T-cell (primary cell): ENCODE measurements at regions of chr3 and their contacts with region 1.

Region 1: GRCh38 chr3:129224984-129225393 is 24.4 kb upstream of the COPG1 start:
- DNase-seq: peak in 3 of 35 experiments; percentile 6 to 22 (median 15)
- ATAC-seq: peak in 2 of 4 experiments; percentile 43 to 44
- H3K4me3 ChIP-seq: no peak overlapping the region
- H3K4me3 Mint-ChIP-seq: peak overlapping the region in 1 of 3 donors; percentile 64
- H3K27ac ChIP-seq: no peak overlapping the region
- H3K27ac Mint-ChIP-seq: peak overlapping the region; percentile 87 to 89
- H3K4me1 ChIP-seq: peaks cover 8 to 18% of the 10 kb centered on the region in 2 experiments
- H3K4me1 Mint-ChIP-seq: peaks cover 17 to 36% (median 33%) of the 10 kb centered on the region in 3 donors
- H3K27me3 ChIP-seq: peaks cover 0 to 5% of the 10 kb centered on the region in 2 experiments
- H3K27me3 Mint-ChIP-seq: no peaks in the 10 kb centered on the region

Region 2: DNA sequence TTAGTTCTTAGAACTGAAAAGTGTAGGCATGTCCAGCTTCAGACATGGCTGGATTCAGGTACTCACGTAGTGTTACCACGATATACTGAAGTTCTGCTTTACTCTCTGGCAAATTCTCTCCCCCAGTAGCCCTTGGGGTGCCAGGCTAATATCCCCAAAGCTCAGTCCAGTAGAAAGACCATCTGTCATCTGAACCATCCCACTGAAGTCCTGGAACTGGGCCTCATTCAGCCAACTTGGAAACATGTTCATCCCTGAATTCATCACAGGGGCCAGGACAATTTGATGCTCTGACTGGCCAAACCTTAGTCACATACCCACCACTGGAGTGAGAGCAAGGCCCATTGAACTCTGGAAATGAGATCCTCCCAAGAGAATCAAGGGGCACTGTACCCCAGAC is 215.7 kb before region 1 on chr3:
- CTCF ChIA-PET with region 1: interaction called in 1 of 2 experiments, 10 read pairs
- POLR2A ChIA-PET with region 1: no interaction called
- DNase-seq: no peak
- ATAC-seq: no peak
- H3K4me3 ChIP-seq: no peak overlapping the region
- H3K4me3 Mint-ChIP-seq: no peak overlapping the region
- H3K27ac ChIP-seq: no peak overlapping the region
- H3K27ac Mint-ChIP-seq: peak overlapping the region in 1 of 2 donors; percentile 58
- H3K4me1 ChIP-seq: peaks cover 4 to 14% of the 10 kb centered on the region in 2 experiments
- H3K4me1 Mint-ChIP-seq: peaks cover 16 to 28% (median 17%) of the 10 kb centered on the region in 3 donors
- H3K27me3 ChIP-seq: peaks cover 0 to 6% of the 10 kb centered on the region in 2 experiments
- H3K27me3 Mint-ChIP-seq: peaks cover 0 to 4% of the 10 kb centered on the region in 2 donors

Region 3: DNA sequence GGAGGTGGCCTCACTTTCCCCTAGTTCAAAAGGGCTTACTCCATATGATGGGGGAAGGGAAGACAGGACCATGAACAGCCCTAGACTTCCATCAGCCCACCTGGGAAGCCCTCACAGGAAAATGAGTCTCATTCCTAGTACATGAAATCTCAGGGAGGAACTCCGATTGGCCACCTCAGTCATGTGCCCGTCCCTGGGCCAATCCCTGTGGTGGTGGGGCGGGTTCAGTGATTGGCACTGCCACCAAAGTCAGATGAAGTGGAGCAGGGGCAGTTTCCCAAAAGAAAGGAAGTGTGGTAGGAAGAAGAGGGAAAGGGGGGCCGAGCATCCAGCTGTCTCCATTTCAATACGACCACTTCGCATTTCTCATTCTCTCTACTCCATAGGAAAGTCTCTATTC is 190.3 kb before region 1 on chr3:
- CTCF ChIA-PET with region 1: no interaction called
- POLR2A ChIA-PET with region 1: no interaction called
- DNase-seq: peak in 1 of 35 experiments; percentile 18
- ATAC-seq: peak in 1 of 4 experiments; percentile 49
- H3K4me3 ChIP-seq: no peak overlapping the region
- H3K4me3 Mint-ChIP-seq: no peak overlapping the region
- H3K27ac ChIP-seq: no peak overlapping the region
- H3K27ac Mint-ChIP-seq: no peak overlapping the region
- H3K4me1 ChIP-seq: peaks cover 9 to 23% of the 10 kb centered on the region in 2 experiments
- H3K4me1 Mint-ChIP-seq: peaks cover 17 to 25% (median 19%) of the 10 kb centered on the region in 3 donors
- H3K27me3 ChIP-seq: peaks cover 0 to 14% of the 10 kb centered on the region in 2 experiments
- H3K27me3 Mint-ChIP-seq: peaks cover under 1 to 5% of the 10 kb centered on the region in 2 donors

Region 4: DNA sequence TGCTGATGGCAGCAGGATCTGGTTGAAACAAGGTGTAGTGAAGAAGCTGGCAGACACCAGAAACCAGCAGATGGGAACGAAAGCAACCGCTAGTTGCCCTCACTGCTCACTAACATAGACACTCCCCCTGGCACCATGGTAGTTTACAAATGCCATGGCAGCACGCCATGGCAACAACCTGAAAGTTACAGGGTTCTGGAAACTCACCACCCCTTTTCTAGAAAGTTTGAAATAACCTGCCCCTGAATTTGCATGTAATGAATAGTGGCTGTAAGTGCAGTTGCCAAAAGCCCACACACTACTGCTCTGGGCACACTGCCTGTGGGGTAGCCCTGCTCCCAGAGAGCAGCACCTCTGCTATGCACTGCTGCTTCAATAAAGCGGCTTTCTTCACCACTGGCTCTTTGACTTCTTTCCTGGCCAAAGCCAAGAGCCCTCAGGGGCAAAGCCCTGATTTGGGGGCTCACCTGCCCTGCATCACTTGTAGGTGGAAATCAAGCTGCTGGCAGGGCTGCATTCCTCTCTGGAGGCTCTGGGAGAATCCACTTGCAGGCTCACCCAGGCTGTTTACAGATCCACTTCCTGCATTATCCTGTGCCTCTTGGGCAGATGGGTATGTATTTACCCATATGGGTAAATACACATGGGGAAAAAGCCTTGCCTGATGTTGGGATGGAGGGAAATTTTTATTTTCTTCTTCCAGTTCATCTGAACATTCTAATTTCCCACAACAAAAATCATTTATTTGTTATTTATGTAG is 166.4 kb before region 1 on chr3:
- CTCF ChIA-PET with region 1: no interaction called
- POLR2A ChIA-PET with region 1: no interaction called
- DNase-seq: peak in 9 of 35 experiments; percentile 18 to 45 (median 26)
- ATAC-seq: peak in 3 of 4 experiments; percentile 13 to 81 (median 43)
- H3K4me3 ChIP-seq: no peak overlapping the region
- H3K4me3 Mint-ChIP-seq: no peak overlapping the region
- H3K27ac ChIP-seq: no peak overlapping the region
- H3K27ac Mint-ChIP-seq: no peak overlapping the region
- H3K4me1 ChIP-seq: peaks cover 0 to 7% of the 10 kb centered on the region in 2 experiments
- H3K4me1 Mint-ChIP-seq: peaks cover 3 to 16% (median 9%) of the 10 kb centered on the region in 3 donors
- H3K27me3 ChIP-seq: peaks cover 0 to 11% of the 10 kb centered on the region in 2 experiments
- H3K27me3 Mint-ChIP-seq: no peaks in the 10 kb centered on the region

Region 5: DNA sequence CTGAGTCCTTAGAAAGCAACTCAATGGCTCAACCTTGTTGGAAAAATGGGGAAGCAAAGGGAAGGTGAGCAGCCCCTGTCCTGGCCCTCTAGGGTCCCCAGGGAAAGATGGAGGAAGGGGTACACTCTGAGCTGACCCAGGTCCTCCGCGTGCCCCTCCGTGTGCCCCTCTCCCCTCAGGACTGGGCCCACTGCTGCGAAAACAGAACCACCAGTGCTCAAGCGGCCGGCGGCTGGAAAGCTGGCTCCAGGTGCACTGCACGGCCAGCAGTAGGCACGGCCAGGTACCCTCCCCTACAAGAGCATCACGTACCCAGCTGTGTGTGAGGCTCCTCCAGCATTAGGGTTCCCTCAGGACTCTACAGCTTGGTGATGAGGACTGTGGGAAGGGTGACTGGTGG is 129.7 kb before region 1 on chr3:
- CTCF ChIA-PET with region 1: no interaction called
- POLR2A ChIA-PET with region 1: interaction called in 1 of 2 experiments, 11 read pairs
- DNase-seq: no peak
- ATAC-seq: no peak
- H3K4me3 ChIP-seq: no peak overlapping the region
- H3K4me3 Mint-ChIP-seq: no peak overlapping the region
- H3K27ac ChIP-seq: no peak overlapping the region
- H3K27ac Mint-ChIP-seq: no peak overlapping the region
- H3K4me1 ChIP-seq: peaks cover 0 to 24% of the 10 kb centered on the region in 2 experiments
- H3K4me1 Mint-ChIP-seq: peaks cover 32 to 37% (median 35%) of the 10 kb centered on the region in 3 donors
- H3K27me3 ChIP-seq: no peaks in the 10 kb centered on the region
- H3K27me3 Mint-ChIP-seq: no peaks in the 10 kb centered on the region

Region 6: GRCh38 chr3:129211772-129212171 is 13.2 kb before region 1 on chr3:
- CTCF ChIA-PET with region 1: interaction called in 1 of 2 experiments, 10 read pairs
- POLR2A ChIA-PET with region 1: no interaction called
- DNase-seq: no peak
- ATAC-seq: no peak
- H3K4me3 ChIP-seq: no peak overlapping the region
- H3K4me3 Mint-ChIP-seq: no peak overlapping the region
- H3K27ac ChIP-seq: no peak overlapping the region
- H3K27ac Mint-ChIP-seq: no peak overlapping the region
- H3K4me1 ChIP-seq: no peaks in the 10 kb centered on the region
- H3K4me1 Mint-ChIP-seq: no peaks in the 10 kb centered on the region
- H3K27me3 ChIP-seq: peaks cover 0 to 7% of the 10 kb centered on the region in 2 experiments
- H3K27me3 Mint-ChIP-seq: peaks cover 0 to 6% of the 10 kb centered on the region in 2 donors